ENCODE measurements at regions of chr14 and their contacts with region 1.

Region 1: DNA sequence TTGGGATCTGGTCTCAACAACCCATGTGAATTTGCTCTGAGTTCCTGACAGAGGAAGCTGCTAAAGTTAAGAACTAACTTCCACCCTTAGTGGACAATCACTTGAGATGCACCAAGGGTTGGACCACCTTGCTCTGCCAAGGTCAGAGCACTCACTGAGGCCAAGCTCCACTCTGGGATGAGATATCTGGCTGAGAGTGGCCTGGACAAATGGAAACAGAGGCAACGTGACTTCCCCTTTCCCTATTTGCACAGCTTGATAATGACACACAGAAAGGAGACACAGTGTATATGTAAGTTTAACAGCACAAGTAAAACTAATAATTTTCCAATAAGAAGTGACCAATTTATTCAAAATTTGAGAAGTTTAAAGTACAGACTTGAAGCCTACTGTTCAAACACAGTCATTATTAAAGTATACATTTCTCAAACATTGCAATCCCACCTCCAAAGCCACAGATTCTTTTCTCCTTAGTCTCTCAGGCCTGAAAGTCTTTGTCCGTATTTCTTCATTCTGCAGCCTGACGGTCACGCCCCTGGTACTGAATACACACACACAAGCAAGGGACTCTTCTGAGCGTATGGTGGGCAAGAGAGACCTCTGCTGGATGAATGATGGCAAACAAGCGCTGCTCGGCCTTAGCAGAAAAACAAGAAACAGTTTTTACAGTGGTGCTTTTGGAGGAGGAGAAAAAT is 28.6 kb downstream of the TMEM30B start:
- DNase-seq: peak; percentile 93
- H3K4me3 Mint-ChIP-seq: no peak overlapping the region
- H3K27ac Mint-ChIP-seq: no peak overlapping the region
- H3K4me1 Mint-ChIP-seq: peaks cover 8% of the 10 kb centered on the region
- H3K27me3 Mint-ChIP-seq: no peaks in the 10 kb centered on the region
- CTCF ChIP-seq: peak; percentile 85

Region 2: DNA sequence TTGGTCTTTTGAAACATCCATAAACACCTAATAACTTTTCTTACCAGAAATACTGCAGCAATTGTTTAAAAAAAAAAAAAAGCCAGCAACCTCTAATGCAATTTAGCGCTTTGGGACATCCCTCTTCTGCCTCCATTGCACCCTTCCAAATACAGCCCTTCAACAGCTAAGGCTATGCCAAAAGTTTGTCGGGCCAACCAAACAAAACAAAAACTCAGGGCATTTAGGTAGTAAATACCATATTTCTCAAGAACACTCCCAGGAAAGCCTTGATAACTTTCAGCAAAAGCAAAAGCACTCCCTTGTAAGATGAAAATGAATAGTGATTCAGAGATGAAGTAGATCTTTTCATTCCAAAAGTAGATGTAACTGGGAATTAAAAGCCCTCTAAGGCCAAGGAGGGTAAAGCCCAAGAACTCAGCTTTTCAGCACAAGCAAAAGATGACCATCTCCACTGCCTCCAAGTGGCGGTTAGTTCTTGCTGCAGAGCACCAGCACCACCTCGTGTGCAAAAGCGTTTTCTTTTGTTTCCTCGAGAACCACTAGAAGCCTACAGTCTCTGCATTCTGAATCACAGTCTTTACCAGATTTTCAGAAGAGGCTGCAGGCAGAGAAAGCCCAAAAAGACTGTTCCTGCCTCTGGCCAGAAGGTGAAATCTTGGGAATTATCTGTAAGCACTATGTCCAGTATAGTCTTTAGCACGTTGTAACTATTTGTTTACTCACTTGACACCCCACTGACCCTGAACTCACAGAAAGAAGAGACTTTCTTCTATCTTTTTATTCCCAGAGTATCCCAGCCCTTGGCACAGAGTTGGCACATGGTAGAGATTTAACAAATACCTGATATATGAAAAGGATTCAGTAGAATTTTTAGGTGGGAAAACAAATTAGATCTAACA is 690.4 kb before region 1 on chr14:
- CTCF ChIA-PET with region 1: no interaction called
- POLR2A ChIA-PET with region 1: no interaction called
- intact Hi-C with region 1: loop called (anchors 2 kb)
- DNase-seq: peak; percentile 71
- H3K4me3 Mint-ChIP-seq: no peak overlapping the region
- H3K27ac Mint-ChIP-seq: no peak overlapping the region
- H3K4me1 Mint-ChIP-seq: no peaks in the 10 kb centered on the region
- H3K27me3 Mint-ChIP-seq: no peaks in the 10 kb centered on the region
- CTCF ChIP-seq: peak; percentile 61

Region 3: GRCh38 chr14:60724137-60724619 is 528.3 kb before region 1 on chr14 and contains the start of gene SIX4:
- CTCF ChIA-PET with region 1: no interaction called
- POLR2A ChIA-PET with region 1: no interaction called
- intact Hi-C with region 1: loop called (anchors 5 kb)
- DNase-seq: peak; percentile 89
- H3K4me3 Mint-ChIP-seq: peak within 1 kb of the TSS; percentile 91
- H3K27ac Mint-ChIP-seq: peak within 1 kb of the TSS; percentile 80
- H3K4me1 Mint-ChIP-seq: no peaks in the 10 kb centered on the region
- H3K27me3 Mint-ChIP-seq: no peaks in the 10 kb centered on the region
- CTCF ChIP-seq: no peak
- total RNA-seq, gene SIX4: 12.9 and 13.6 TPM in 2 replicates

Region 4: GRCh38 chr14:60965402-60965801 is 287.1 kb before region 1 on chr14:
- CTCF ChIA-PET with region 1: no interaction called
- POLR2A ChIA-PET with region 1: no interaction called
- intact Hi-C with region 1: no loop called
- DNase-seq: peak; percentile 27
- H3K4me3 Mint-ChIP-seq: no peak overlapping the region
- H3K27ac Mint-ChIP-seq: no peak overlapping the region
- H3K4me1 Mint-ChIP-seq: no peaks in the 10 kb centered on the region
- H3K27me3 Mint-ChIP-seq: no peaks in the 10 kb centered on the region
- CTCF ChIP-seq: no peak

Region 5: DNA sequence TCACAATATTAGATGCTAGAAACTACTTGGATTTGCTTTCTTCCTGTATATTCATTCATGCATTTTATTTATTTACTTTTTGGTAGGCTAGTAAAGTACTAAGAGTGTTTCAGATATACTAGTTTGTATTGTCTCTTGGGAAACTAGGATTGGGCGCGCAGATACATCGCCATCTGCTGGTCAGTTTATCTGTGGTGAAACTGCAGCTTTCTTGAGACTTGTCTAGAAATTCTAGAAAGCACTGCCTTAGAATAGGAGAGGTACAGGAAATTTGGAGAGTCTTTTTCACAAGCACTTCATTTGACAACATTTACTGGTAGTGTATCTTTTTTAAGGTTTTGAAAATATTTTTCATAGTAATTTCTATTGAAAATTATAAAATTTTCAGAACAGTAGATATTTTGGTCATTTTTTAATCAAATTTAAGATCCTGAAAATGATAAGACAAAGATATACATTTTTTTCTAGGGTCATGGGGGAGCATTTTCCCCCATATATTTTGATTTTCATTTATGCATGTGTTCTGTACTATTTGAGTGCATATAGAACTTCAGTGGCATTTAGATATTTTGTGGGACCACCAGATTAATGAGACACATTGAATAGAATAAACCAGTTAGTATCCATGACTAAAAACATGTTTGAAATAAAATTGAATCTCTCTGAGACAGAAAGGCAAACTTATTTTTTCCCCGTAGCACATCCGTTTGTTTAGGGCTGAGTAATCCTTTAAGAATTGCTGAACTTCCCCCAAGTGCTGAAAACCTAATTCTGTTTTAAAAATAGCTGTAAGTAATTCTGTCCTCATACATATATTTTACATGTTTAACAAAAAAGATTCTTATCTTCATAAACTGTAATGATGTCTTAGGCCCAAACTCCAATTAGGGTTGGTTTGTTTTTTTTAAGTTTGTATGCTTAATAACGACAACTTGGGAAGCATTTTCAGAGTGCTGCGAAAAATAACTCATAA is 227.0 kb before region 1 on chr14:
- CTCF ChIA-PET with region 1: interaction called, 7 read pairs
- POLR2A ChIA-PET with region 1: interaction called, 3 read pairs
- intact Hi-C with region 1: loop called (anchors 1 kb)
- DNase-seq: peak; percentile 77
- H3K4me3 Mint-ChIP-seq: no peak overlapping the region
- H3K27ac Mint-ChIP-seq: no peak overlapping the region
- H3K4me1 Mint-ChIP-seq: peaks cover 5% of the 10 kb centered on the region
- H3K27me3 Mint-ChIP-seq: no peaks in the 10 kb centered on the region
- CTCF ChIP-seq: peak; percentile 76

Region 6: DNA sequence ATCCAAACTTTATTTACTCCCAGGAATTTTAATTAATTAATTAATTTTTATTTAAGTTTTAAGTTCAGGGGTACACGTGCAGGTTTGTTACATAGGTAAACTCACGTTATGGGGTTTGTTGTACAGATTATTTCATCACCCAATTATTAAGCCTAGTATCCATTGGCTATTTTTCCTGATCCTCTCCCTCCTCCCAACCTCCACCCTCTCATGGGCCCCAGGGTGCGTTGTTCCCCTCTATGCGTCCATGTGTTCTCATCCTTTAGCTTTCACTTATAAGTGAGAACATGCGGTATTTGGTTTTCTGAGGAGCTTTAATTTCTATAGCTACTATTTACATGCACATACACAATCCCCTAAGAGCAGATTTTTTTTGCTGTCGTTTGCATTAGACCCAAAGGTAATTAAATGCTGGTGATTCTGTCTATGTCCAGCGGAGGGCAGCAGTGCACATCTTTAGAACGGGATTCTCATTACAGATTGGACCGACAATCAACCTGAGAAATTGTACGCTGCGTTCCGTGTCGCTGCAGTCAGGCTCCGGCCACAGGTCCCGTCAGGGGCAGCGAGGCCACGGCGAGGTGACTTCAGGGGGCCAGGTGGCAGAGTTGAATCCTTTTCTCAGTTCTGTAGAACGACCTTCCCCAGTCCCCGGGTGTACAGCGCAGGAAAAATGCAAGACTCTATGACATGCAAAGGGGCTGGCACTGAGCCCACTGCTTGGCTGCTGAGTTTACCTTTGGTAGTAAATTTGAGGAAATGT is 17.0 kb after region 1 on chr14:
- CTCF ChIA-PET with region 1: interaction called, 16 read pairs
- POLR2A ChIA-PET with region 1: interaction called, 3 read pairs
- intact Hi-C with region 1: no loop called
- DNase-seq: peak; percentile 90
- H3K4me3 Mint-ChIP-seq: peak overlapping the region; percentile 65
- H3K27ac Mint-ChIP-seq: no peak overlapping the region
- H3K4me1 Mint-ChIP-seq: no peaks in the 10 kb centered on the region
- H3K27me3 Mint-ChIP-seq: peaks cover 39% of the 10 kb centered on the region
- CTCF ChIP-seq: peak; percentile 79